Activated CD4-positive, alpha-beta T cell treated with anti-CD3 and anti-CD28 coated beads for 36 hours (primary cell): ENCODE measurements at regions of chr15 and their contacts with region 1.

Region 1: DNA sequence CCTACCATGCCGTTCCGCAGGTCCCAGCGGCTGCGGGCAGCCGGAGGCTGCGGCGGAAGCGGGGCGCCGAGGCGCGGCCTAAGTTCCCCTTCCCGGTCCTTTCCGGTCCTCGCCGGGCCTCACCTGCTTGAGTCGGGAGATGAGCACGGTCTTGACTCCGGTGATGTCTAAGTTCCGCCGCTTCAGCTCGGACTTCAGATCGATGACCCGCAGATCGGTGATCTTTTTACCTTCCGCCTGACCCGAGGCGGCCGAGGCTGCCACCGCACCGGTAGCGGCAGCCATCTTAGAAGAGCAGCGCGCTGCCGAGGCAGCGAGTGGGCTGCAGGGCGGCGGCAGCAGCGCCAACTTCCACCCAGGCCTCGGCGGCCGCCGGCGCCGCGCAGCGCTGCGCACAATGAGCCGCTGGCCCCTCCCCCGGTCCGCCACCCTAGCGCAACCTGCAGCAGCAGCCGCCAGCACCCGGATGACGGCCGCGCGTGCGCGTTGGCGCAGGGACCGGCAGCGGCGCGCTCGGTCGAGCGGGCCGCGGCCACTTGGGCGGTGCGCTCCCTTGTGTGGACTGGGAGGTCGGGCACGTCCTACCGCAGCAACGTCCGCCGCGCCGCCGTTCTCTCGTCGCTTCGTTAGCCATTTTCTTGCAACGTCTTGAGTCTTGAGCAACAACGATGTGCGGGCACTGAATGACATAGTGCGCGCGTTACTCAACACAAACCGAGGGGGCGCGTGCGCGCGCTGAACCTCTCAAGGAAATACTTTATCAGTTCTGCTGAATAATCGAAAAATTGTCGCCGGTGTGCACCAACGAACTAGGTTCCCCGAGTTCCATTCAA is at the start of gene SLTM:
- DNase-seq: peak; percentile 96
- ATAC-seq: peak; percentile 94
- H3K4me3 Mint-ChIP-seq: peak within 1 kb of the TSS; percentile 90
- H3K27ac Mint-ChIP-seq: peak within 1 kb of the TSS; percentile 100
- H3K4me1 Mint-ChIP-seq: peaks cover 17% of the 10 kb centered on the region
- H3K27me3 Mint-ChIP-seq: no peaks in the 10 kb centered on the region
- total RNA-seq, gene SLTM: 85.6 to 85.9 TPM

Region 2: GRCh38 chr15:58423831-58424608 is 509.5 kb before region 1 on chr15:
- CTCF ChIA-PET with region 1: no interaction called
- POLR2A ChIA-PET with region 1: no interaction called
- intact Hi-C with region 1: no loop called
- DNase-seq: peak; percentile 17
- ATAC-seq: peak; percentile 66
- H3K4me3 Mint-ChIP-seq: no peak overlapping the region
- H3K27ac Mint-ChIP-seq: no peak overlapping the region
- H3K4me1 Mint-ChIP-seq: peaks cover 18% of the 10 kb centered on the region
- H3K27me3 Mint-ChIP-seq: no peaks in the 10 kb centered on the region

Region 3: GRCh38 chr15:58749532-58750337 is 183.8 kb before region 1 on chr15 and contains the start of gene ADAM10:
- CTCF ChIA-PET with region 1: interaction called, 6 read pairs
- POLR2A ChIA-PET with region 1: no interaction called
- intact Hi-C with region 1: loop called (anchors 1 kb)
- DNase-seq: peak; percentile 99
- ATAC-seq: peak; percentile 95
- H3K4me3 Mint-ChIP-seq: peak within 1 kb of the TSS; percentile 80
- H3K27ac Mint-ChIP-seq: peak within 1 kb of the TSS; percentile 93
- H3K4me1 Mint-ChIP-seq: peaks cover 36% of the 10 kb centered on the region
- H3K27me3 Mint-ChIP-seq: no peaks in the 10 kb centered on the region
- total RNA-seq, gene ADAM10: 74.5 to 82.0 TPM

Region 4: DNA sequence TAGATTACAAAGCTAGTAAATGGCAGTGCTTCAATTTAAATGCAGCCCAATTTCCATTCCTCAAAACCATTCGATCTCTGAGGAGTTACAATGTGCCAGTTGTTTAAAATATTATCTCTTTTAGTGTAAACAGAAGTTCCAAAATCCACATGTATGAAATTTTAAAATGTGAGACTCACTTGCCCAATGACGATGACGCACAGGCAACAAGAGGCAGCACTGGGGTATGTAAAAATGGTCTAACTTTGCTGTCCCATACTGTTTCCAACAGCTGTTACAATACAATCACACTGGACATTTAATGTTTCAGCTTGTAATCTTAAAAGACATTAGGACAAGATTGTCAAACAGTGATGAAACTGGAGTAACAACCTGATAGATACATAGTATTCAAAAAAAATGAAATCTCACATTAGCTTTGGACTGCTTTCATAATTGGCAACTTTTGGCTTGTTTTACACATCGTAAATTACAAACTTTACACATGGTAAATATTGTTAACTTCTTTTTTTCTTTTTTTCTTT is 12.2 kb before region 1 on chr15:
- CTCF ChIA-PET with region 1: interaction called, 14 read pairs
- POLR2A ChIA-PET with region 1: no interaction called
- intact Hi-C with region 1: no loop called
- DNase-seq: no peak
- ATAC-seq: no peak
- H3K4me3 Mint-ChIP-seq: no peak overlapping the region
- H3K27ac Mint-ChIP-seq: no peak overlapping the region
- H3K4me1 Mint-ChIP-seq: peaks cover 26% of the 10 kb centered on the region
- H3K27me3 Mint-ChIP-seq: no peaks in the 10 kb centered on the region

Region 5: GRCh38 chr15:58987489-58988005 is 54.0 kb after region 1 on chr15 and contains the start of gene RNF111:
- CTCF ChIA-PET with region 1: no interaction called
- POLR2A ChIA-PET with region 1: no interaction called
- intact Hi-C with region 1: loop called (anchors 1 to 2 kb)
- DNase-seq: peak; percentile 93
- ATAC-seq: peak; percentile 91
- H3K4me3 Mint-ChIP-seq: peak within 1 kb of the TSS; percentile 96
- H3K27ac Mint-ChIP-seq: peak within 1 kb of the TSS; percentile 92
- H3K4me1 Mint-ChIP-seq: peaks cover 37% of the 10 kb centered on the region
- H3K27me3 Mint-ChIP-seq: no peaks in the 10 kb centered on the region
- total RNA-seq, gene RNF111: 27.0 to 36.0 TPM

Region 6: GRCh38 chr15:59104912-59105732 is 171.6 kb after region 1 on chr15 and contains the start of gene CCNB2:
- CTCF ChIA-PET with region 1: no interaction called
- POLR2A ChIA-PET with region 1: no interaction called
- intact Hi-C with region 1: loop called in 1 of 2 experiments (anchors 1 kb)
- DNase-seq: peak; percentile 92
- ATAC-seq: peak; percentile 99
- H3K4me3 Mint-ChIP-seq: peak within 1 kb of the TSS; percentile 91
- H3K27ac Mint-ChIP-seq: peak within 1 kb of the TSS; percentile 91
- H3K4me1 Mint-ChIP-seq: peaks cover 11% of the 10 kb centered on the region
- H3K27me3 Mint-ChIP-seq: no peaks in the 10 kb centered on the region
- total RNA-seq, gene CCNB2: 68.0 to 75.3 TPM